ENCODE measurements at regions of chr1 and their contacts with region 1.

Region 1: GRCh38 chr1:198465201-198466144 is 75.0 kb downstream of the ATP6V1G3 start:
- DNase-seq: peak; percentile 62
- H3K4me3 ChIP-seq: no peak overlapping the region
- H3K27ac ChIP-seq: no peak overlapping the region
- H3K4me1 ChIP-seq: no peaks in the 10 kb centered on the region
- CTCF ChIP-seq: peak; percentile 96

Region 2: DNA sequence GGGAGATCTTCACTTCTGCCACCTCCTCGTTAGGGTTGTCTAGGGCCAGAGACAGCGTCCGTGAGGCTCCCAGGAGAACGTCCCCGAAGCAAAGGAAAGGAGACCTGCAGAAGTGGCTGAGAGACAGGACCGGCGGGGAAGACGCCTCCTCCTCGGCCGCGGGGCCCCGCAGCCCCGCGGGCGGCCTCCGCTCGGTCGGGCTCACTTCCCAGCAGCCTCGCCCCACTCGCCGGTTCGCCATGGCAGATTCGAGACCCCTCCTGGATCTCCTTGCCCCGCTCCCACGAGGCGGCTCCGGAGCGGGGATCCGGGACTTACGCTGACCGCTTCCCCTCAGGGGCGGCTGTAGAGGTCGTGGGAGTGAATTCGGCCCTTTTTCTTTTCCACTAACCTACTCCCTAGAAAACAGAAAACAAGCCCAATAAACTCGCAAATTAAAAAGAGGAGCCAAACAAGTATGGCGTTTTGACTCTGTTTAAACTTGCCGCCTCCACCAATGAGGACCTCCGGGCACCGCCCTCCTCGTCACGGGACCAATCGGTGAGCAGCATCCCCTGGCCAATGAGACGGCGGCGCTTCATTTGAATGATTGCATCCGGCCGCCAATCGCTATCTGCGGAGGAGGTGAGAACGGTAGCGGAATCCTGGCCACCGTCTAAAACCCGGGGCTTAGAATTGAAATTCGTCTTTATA is 1319.1 kb before region 1 on chr1 and contains the start of gene ASPM:
- CTCF ChIA-PET with region 1: no interaction called
- POLR2A ChIA-PET with region 1: interaction called, 3 read pairs
- intact Hi-C with region 1: loop called (anchors 5 kb)
- DNase-seq: peak; percentile 95
- H3K4me3 ChIP-seq: peak within 1 kb of the TSS; percentile 88
- H3K27ac ChIP-seq: peak within 1 kb of the TSS; percentile 90
- H3K4me1 ChIP-seq: peaks cover 29% of the 10 kb centered on the region
- CTCF ChIP-seq: no peak
- total RNA-seq, gene ASPM: 88.4 and 88.6 TPM in 2 replicates

Region 3: DNA sequence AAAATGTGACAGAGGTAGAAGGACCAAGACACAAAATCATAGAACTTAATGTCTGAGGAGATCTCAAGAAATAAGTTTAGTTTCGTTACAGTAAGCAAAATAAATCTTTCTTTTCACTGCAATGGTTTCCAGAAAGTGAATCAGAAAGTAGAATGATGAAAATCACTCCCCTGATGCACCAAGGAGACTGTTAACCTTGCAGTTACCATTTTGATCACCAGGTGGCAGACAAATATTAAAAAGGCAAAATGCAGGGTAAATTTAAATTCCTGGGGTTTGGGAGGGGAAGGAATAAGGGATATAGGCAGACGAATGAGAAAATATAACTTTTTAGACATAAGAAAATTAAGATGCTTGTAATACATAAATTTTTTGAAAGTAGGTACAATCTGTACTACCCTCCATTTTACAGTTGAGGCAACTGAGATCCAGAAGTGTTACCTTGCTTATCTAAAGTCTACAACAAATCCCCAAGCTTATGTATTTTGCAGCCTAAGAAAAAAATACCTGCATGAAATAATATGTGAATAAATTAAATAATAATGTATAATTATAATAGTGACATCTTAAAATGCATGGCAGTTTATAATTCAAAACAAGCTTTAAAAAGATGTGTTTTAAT is 944.2 kb before region 1 on chr1:
- CTCF ChIA-PET with region 1: no interaction called
- POLR2A ChIA-PET with region 1: no interaction called
- intact Hi-C with region 1: loop called (anchors 10 kb)
- DNase-seq: peak; percentile 45
- H3K4me3 ChIP-seq: no peak overlapping the region
- H3K27ac ChIP-seq: no peak overlapping the region
- H3K4me1 ChIP-seq: no peaks in the 10 kb centered on the region
- CTCF ChIP-seq: peak; percentile 91

Region 4: DNA sequence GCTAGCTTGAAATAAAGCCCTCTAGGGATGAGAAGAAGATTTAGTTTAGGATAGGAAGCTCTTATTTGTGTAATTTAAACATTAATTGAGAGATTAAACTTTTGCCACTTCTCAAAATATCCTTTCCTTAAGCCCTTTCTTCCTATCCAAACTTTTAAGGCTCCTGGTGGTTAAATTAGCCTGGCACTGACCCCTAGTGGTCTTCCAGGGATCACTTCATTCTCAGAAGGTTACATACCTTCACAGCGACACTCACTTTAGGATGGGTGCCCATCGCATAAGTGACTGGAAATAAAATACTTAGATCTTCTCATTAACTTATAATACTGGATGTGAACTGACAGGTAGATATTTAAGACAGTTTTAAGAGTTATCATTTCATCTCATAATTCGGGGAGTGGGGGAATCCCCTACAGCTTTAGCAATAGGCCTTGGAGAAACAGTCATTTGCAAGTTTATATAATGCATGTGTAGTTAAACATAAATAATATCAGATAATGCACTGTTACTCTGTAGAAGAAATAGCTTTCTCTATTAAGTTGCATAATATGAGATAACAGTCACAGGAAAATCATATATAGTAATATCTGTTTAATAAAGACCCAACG is 540.9 kb before region 1 on chr1:
- CTCF ChIA-PET with region 1: no interaction called
- POLR2A ChIA-PET with region 1: no interaction called
- intact Hi-C with region 1: loop called (anchors 5 kb)
- DNase-seq: peak; percentile 61
- H3K4me3 ChIP-seq: no peak overlapping the region
- H3K27ac ChIP-seq: no peak overlapping the region
- H3K4me1 ChIP-seq: peaks cover 3% of the 10 kb centered on the region
- CTCF ChIP-seq: peak; percentile 91

Region 5: DNA sequence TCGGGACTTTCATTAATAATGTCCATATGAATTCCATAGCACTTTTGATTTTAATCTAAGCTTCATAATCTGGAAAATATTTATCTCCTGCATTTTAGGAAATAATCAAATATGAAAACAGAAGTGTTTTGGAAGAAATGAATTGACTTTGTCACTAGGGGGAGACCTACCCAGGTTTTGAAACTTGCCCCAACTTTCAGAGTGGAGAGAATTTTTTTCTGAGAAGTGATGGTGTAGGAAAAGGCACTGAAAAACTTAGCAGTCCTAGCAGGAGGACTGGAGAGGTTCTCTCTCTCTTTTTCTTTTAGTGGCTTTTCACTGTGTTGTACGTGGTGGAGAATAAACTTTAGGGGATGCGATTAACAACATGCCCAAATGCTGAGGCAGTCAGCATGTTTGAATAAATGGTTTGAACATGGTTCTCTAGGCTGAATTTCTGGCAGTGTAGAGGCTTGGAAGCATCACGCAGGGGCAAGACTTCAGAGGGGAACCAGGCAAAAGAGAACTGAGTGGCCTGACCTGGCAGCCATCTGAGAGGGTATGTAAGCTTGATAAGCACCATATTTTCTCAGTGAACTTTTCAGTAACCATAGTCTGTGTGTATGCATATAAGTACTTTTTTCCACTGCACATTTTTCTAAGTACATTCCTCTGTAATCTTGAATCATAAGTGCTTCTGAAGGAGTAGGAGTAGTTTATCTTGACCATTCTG is 377.0 kb before region 1 on chr1:
- CTCF ChIA-PET with region 1: no interaction called
- POLR2A ChIA-PET with region 1: no interaction called
- intact Hi-C with region 1: loop called (anchors 1 kb)
- DNase-seq: peak; percentile 47
- H3K4me3 ChIP-seq: no peak overlapping the region
- H3K27ac ChIP-seq: no peak overlapping the region
- H3K4me1 ChIP-seq: no peaks in the 10 kb centered on the region
- CTCF ChIP-seq: peak; percentile 89

Region 6: DNA sequence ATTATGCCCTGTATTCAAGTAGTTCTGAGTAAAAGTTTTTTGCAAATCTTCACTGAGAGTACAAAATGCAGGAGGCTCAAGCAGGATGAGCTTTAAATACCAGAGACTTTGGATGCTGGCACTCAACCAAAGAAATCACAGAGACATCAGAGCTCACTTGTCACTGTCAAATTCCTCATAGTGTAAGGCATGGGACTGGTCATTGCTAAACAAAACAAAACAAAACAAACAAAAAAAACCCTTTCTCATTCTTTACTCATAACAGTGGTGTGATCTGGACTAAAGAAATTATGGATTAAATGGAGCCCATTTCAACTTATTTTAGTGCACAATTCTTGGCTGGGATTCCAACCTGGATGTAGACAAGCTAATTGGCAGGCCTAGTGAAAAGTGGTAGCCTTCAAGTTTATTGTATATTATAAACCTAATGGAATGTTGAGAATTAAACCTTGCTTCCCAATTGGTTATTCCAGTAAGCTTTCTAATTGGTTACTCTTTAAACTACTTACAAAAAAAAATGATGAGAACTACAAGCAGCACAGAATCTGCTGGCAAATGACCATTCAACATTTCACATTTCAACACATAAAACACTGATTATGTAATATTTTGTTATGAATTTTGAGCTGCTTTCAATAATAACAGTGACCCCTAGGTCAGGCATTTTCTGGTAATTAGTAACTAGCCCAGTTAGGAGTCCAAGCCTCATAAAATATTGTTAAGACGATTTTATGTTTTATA is 339.3 kb before region 1 on chr1:
- CTCF ChIA-PET with region 1: no interaction called
- POLR2A ChIA-PET with region 1: no interaction called
- intact Hi-C with region 1: no loop called
- DNase-seq: no peak
- H3K4me3 ChIP-seq: no peak overlapping the region
- H3K27ac ChIP-seq: no peak overlapping the region
- H3K4me1 ChIP-seq: no peaks in the 10 kb centered on the region
- CTCF ChIP-seq: no peak

Region 7: GRCh38 chr1:198481661-198482060 is 16.2 kb after region 1 on chr1:
- CTCF ChIA-PET with region 1: interaction called, 3 read pairs
- POLR2A ChIA-PET with region 1: interaction called, 12 read pairs
- intact Hi-C with region 1: no loop called
- DNase-seq: no peak
- H3K4me3 ChIP-seq: no peak overlapping the region
- H3K27ac ChIP-seq: no peak overlapping the region
- H3K4me1 ChIP-seq: no peaks in the 10 kb centered on the region
- CTCF ChIP-seq: no peak

Region 8: DNA sequence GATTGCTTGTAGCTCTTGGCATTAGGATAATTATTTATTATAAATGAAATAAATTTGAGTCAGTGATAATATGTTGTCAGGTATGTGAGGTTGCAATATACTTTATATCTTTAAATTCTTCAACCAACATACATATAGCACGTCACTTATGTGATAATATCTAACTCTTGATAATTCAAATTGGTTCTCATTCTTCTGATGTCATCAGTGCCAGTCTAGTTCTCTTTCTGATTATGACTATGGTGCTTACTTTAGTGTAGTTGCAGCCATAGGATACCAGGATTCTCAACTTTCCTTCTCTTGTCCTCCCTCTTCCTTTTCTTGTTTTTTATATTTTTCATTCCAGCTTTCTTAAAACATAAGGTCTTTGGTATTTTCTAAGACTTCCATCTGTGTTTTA is 109.8 kb after region 1 on chr1:
- CTCF ChIA-PET with region 1: no interaction called
- POLR2A ChIA-PET with region 1: no interaction called
- intact Hi-C with region 1: no loop called
- DNase-seq: no peak
- H3K4me3 ChIP-seq: no peak overlapping the region
- H3K27ac ChIP-seq: no peak overlapping the region
- H3K4me1 ChIP-seq: peaks cover 8% of the 10 kb centered on the region
- CTCF ChIP-seq: no peak

Region 9: GRCh38 chr1:199113265-199113869 is 647.9 kb after region 1 on chr1:
- CTCF ChIA-PET with region 1: no interaction called
- POLR2A ChIA-PET with region 1: no interaction called
- intact Hi-C with region 1: loop called (anchors 10 kb)
- DNase-seq: peak; percentile 80
- H3K4me3 ChIP-seq: no peak overlapping the region
- H3K27ac ChIP-seq: no peak overlapping the region
- H3K4me1 ChIP-seq: no peaks in the 10 kb centered on the region
- CTCF ChIP-seq: peak; percentile 98

Measured in OCI-LY7 (cell line).